K562 (cell line): ENCODE measurements at regions of chr12 and their contacts with region 1.

Region 1: DNA sequence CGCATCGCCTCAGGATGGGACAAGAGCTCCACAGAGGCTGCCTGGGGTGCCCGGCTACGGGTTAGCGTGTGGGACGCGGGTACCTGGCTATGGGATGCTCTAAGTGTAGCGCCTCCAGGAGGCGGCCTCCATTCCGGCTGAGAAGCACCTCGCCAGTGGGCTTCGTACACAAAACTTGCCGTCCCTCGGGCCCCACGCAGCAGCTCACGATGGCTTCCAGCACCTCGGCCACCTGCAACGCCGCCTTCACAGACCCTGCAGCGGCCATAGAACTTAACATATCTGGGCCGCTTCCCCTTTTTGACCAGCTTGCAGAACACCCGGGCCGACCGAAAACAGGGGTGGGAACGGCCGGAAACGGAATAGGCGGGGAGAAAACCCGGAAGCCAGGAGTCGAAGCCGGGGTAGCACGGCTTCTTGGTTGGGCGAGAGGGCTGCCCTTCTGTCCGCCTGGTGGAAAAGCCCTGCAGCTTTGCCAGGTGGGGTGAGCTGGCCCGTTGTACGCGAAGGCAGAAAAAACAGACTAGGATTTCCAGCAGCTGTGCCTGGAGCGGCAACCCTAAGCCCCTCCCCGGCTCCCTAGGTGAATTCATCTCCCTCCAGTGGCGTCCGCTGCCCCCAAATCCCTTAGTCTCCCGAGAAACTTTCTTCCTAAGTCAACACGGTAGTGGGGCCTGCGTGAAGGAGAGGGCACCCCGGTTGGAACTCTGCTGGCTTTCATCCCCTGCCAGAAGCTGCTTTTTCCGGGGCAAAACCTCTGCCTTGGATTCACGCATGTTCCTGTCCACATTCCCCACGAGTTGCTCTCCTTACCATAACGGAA is at the start of gene BBS10:
- DNase-seq: peak; percentile 66 to 92 (median 78)
- ATAC-seq: peak; percentile 98
- H3K4me3 ChIP-seq: peak within 1 kb of the TSS; percentile 55
- H3K27ac ChIP-seq: peak within 1 kb of the TSS; percentile 78
- H3K4me1 ChIP-seq: peaks cover 8 to 13% of the 10 kb centered on the region in 2 experiments; a peak in 4 of 5 replicates
- H3K27me3 ChIP-seq: no peaks in the 10 kb centered on the region
- CTCF ChIP-seq: peak; percentile 41 to 62 (median 43)
- EP300 ChIP-seq: no peak
- POLR2A ChIP-seq: peak; percentile 88
- RAD21 ChIP-seq: peak in 1 of 2 experiments; percentile 41; a peak in 3 of 4 replicates
- polyA plus RNA-seq, gene BBS10: 2.3 to 2.7 TPM

Region 2: GRCh38 chr12:75334384-75335030 is 1013.8 kb before region 1 on chr12 and contains the start of gene GLIPR1L1:
- CTCF ChIA-PET with region 1: no interaction called
- POLR2A ChIA-PET with region 1: no interaction called
- in situ Hi-C with region 1: loop called (anchors 10 kb)
- intact Hi-C with region 1: no loop called
- DNase-seq: peak; percentile 26 to 79 (median 32)
- ATAC-seq: peak; percentile 77
- H3K4me3 ChIP-seq: no peak within 1 kb of the TSS
- H3K27ac ChIP-seq: no peak within 1 kb of the TSS
- H3K4me1 ChIP-seq: peaks cover 0 to 10% of the 10 kb centered on the region in 2 experiments; a peak in 2 of 5 replicates
- H3K27me3 ChIP-seq: no peaks in the 10 kb centered on the region
- CTCF ChIP-seq: peak; percentile 72 to 81 (median 76)
- EP300 ChIP-seq: no peak
- POLR2A ChIP-seq: no peak
- RAD21 ChIP-seq: peak; percentile 47 to 69
- polyA plus RNA-seq, gene GLIPR1L1: not detected

Region 3: GRCh38 chr12:75526655-75527511 is 821.4 kb before region 1 on chr12:
- CTCF ChIA-PET with region 1: interaction called, 3 read pairs
- POLR2A ChIA-PET with region 1: no interaction called
- in situ Hi-C with region 1: no loop called
- intact Hi-C with region 1: loop called (anchors 5 kb)
- DNase-seq: peak; percentile 19 to 52 (median 25)
- ATAC-seq: peak; percentile 70
- H3K4me3 ChIP-seq: no peak overlapping the region
- H3K27ac ChIP-seq: no peak overlapping the region
- H3K4me1 ChIP-seq: no peaks in the 10 kb centered on the region
- H3K27me3 ChIP-seq: no peaks in the 10 kb centered on the region
- CTCF ChIP-seq: peak; percentile 28 to 70 (median 65); a peak in 5 of 6 replicates
- EP300 ChIP-seq: no peak
- POLR2A ChIP-seq: no peak
- RAD21 ChIP-seq: peak; percentile 89 to 90

Region 4: GRCh38 chr12:76083904-76084862 is 264.1 kb before region 1 on chr12 and contains the start of gene NAP1L1:
- CTCF ChIA-PET with region 1: no interaction called
- POLR2A ChIA-PET with region 1: no interaction called
- in situ Hi-C with region 1: loop called (anchors 10 kb)
- intact Hi-C with region 1: loop called (anchors 2 kb)
- DNase-seq: peak; percentile 90 to 98 (median 93)
- ATAC-seq: peak; percentile 91
- H3K4me3 ChIP-seq: peak within 1 kb of the TSS; percentile 91
- H3K27ac ChIP-seq: peak within 1 kb of the TSS; percentile 93
- H3K4me1 ChIP-seq: peaks cover 16 to 38% of the 10 kb centered on the region in 2 experiments
- H3K27me3 ChIP-seq: no peaks in the 10 kb centered on the region
- CTCF ChIP-seq: peak in 2 of 3 experiments; percentile 9 to 23; a peak in 1 of 6 replicates
- EP300 ChIP-seq: 0 out of 2 replicates have a peak, but pooled peaks have one; percentile 4
- POLR2A ChIP-seq: peak; percentile 93
- RAD21 ChIP-seq: no peak; a peak in 1 of 4 replicates
- polyA plus RNA-seq, gene NAP1L1: 287 to 326 TPM

Region 5: GRCh38 chr12:76308866-76309265 is 39.4 kb before region 1 on chr12:
- CTCF ChIA-PET with region 1: no interaction called
- POLR2A ChIA-PET with region 1: no interaction called
- in situ Hi-C with region 1: no loop called
- intact Hi-C with region 1: loop called (anchors 5 kb)
- DNase-seq: no peak
- ATAC-seq: no peak
- H3K4me3 ChIP-seq: no peak overlapping the region
- H3K27ac ChIP-seq: no peak overlapping the region
- H3K4me1 ChIP-seq: peaks cover 0 to 9% of the 10 kb centered on the region in 2 experiments; a peak in 1 of 5 replicates
- H3K27me3 ChIP-seq: no peaks in the 10 kb centered on the region
- CTCF ChIP-seq: no peak
- EP300 ChIP-seq: no peak
- POLR2A ChIP-seq: no peak
- RAD21 ChIP-seq: no peak

Region 6: GRCh38 chr12:76586764-76587395 is 238.6 kb after region 1 on chr12:
- CTCF ChIA-PET with region 1: no interaction called
- POLR2A ChIA-PET with region 1: no interaction called
- in situ Hi-C with region 1: no loop called
- intact Hi-C with region 1: loop called (anchors 1 kb)
- DNase-seq: peak; percentile 17 to 70 (median 20)
- ATAC-seq: peak; percentile 86
- H3K4me3 ChIP-seq: no peak overlapping the region
- H3K27ac ChIP-seq: no peak overlapping the region
- H3K4me1 ChIP-seq: no peaks in the 10 kb centered on the region; a peak in 1 of 5 replicates
- H3K27me3 ChIP-seq: no peaks in the 10 kb centered on the region
- CTCF ChIP-seq: peak; percentile 47 to 83 (median 58); a peak in 4 of 6 replicates
- EP300 ChIP-seq: no peak
- POLR2A ChIP-seq: no peak
- RAD21 ChIP-seq: peak; percentile 85 to 88